Dendritic cell treated with granulocyte-macrophage colony-stimulating factor and Interleukin-4, amounts not matched to agents 40 ng/mL and 50 ng/mL, for 4 days (primary cell): ENCODE measurements at regions of chr6 and their contacts with region 1.

Region 1: DNA sequence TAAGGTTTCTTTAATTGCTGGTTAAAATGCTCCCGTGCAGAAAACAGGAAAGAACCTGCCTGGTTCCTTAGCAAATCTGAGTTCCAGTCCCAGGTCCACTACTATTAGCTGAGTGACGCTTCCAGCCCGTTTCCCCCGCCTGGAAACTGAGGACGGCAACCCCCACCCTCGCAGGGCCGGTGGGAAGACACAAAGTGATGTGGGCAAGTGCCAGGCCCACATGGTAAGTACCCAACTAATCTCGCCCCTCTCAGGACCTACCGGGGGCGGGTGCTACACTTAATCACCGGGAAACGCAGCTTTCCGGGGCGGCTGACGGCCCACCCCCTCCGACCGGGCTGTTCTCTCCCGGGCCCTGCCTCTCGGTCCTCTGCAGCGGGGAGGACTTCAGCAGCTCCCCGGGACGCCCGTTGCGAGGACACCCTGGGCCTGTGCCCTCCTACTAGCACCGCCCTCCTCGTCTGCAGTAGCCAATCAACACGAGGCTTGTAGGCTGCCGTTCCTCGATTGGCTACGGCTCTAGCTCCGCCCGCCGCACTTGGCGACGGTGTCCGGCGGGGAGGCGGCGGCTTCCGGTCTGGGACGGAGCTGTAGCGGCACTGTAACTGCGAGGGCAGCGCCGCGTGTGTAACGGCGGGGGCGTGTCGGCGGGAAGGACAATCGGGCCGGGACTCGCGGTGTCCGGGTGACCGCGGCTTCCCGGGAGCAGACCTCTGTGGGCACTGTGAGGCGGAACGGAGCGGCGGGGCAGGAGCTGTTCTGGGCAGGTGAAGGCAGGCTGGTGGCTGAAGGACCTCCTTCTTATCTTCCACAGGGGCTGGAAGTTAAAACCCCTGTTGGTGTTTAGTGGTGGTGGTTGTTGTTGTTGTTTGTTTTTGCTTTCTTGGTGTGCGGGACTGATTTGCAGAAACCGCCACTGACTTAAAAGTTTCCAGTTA is at the start of gene ZBTB9:
- H3K4me3 Mint-ChIP-seq: peak within 1 kb of the TSS; percentile 93
- H3K27ac Mint-ChIP-seq: peak within 1 kb of the TSS; percentile 86
- H3K4me1 Mint-ChIP-seq: peaks cover 59% of the 10 kb centered on the region
- H3K27me3 Mint-ChIP-seq: no peaks in the 10 kb centered on the region

Region 2: GRCh38 chr6:33391278-33391921 is 62.9 kb before region 1 on chr6 and contains the start of gene KIFC1:
- intact Hi-C with region 1: loop called (anchors 1 kb)
- H3K4me3 Mint-ChIP-seq: peak within 1 kb of the TSS; percentile 82
- H3K27ac Mint-ChIP-seq: peak within 1 kb of the TSS; percentile 85
- H3K4me1 Mint-ChIP-seq: peaks cover 28% of the 10 kb centered on the region
- H3K27me3 Mint-ChIP-seq: no peaks in the 10 kb centered on the region

Region 3: GRCh38 chr6:33410050-33410710 is 44.1 kb before region 1 on chr6:
- intact Hi-C with region 1: loop called (anchors 5 kb)
- H3K4me3 Mint-ChIP-seq: peak overlapping the region; percentile 82
- H3K27ac Mint-ChIP-seq: peak overlapping the region; percentile 94
- H3K4me1 Mint-ChIP-seq: peaks cover 40% of the 10 kb centered on the region
- H3K27me3 Mint-ChIP-seq: no peaks in the 10 kb centered on the region

Region 4: DNA sequence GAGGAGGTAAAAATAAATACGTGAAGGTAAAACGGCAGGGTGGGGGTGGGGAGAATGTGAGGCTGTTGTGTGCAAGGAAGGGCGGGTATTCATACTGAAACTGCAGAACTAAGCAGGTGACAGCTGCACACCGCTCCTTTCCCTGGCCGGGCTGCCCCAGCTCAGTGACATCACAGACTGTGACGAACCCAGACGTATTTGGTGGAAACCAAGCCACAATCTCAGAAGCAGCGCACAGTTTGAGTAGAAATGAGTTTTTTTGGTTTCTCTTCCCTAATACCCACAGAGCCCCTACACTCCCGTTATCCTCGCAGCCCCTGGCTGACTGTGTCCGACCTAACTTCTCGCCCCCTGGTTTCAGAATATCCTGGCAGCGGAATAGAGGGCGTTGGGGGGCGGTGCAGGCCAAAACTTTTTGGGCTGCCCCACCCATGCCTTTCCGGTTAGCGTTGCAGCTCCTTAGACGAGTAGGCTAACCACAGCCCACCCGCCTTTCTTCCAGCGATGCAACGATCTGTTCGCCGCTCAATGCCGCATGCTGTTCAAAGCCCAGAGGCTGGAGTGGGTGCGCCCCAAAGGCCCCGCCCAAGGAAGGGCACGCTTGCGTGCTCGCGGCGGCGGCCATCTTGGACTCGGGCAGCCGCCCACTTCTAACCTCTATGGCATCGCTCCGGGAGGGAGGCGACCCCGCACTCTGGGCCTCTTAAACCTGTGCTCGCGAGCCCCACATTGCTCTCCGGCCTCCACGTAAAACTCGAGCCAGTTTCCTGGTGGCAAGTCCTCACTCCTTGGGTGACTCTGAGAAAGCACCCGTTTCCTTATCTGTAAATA is 116.7 kb after region 1 on chr6:
- intact Hi-C with region 1: loop called (anchors 5 kb)
- H3K4me3 Mint-ChIP-seq: peak overlapping the region; percentile 87
- H3K27ac Mint-ChIP-seq: peak overlapping the region; percentile 93
- H3K4me1 Mint-ChIP-seq: peaks cover 30% of the 10 kb centered on the region
- H3K27me3 Mint-ChIP-seq: no peaks in the 10 kb centered on the region